ENCODE measurements at regions of chr11 and their contacts with region 1.

Region 1: GRCh38 chr11:64164392-64165312 is 1.3 kb downstream of the MACROD1 start:
- DNase-seq: no peak
- H3K4me3 ChIP-seq: peak overlapping the region; percentile 68
- H3K27ac ChIP-seq: no peak overlapping the region
- H3K27me3 ChIP-seq: no peaks in the 10 kb centered on the region
- CTCF ChIP-seq: no peak

Region 2: GRCh38 chr11:63945477-63946163 is 219.0 kb before region 1 on chr11:
- CTCF ChIA-PET with region 1: no interaction called
- POLR2A ChIA-PET with region 1: no interaction called
- DNase-seq: peak; percentile 27
- H3K4me3 ChIP-seq: no peak overlapping the region
- H3K27ac ChIP-seq: peak overlapping the region; percentile 21
- H3K27me3 ChIP-seq: no peaks in the 10 kb centered on the region
- CTCF ChIP-seq: peak; percentile 69

Region 3: GRCh38 chr11:64152841-64153691 is 11.6 kb before region 1 on chr11:
- CTCF ChIA-PET with region 1: interaction called, 14 read pairs
- POLR2A ChIA-PET with region 1: no interaction called
- DNase-seq: no peak
- H3K4me3 ChIP-seq: no peak overlapping the region
- H3K27ac ChIP-seq: no peak overlapping the region
- H3K27me3 ChIP-seq: no peaks in the 10 kb centered on the region
- CTCF ChIP-seq: peak; percentile 97